ENCODE measurements at regions of chr5 and their contacts with region 1.

Region 1: GRCh38 chr5:181173420-181174342 is 26.3 kb downstream of the OR2V2 start:
- DNase-seq: peak; percentile 71
- H3K4me3 Mint-ChIP-seq: peak overlapping the region; percentile 87
- H3K27ac Mint-ChIP-seq: peak overlapping the region; percentile 92
- H3K4me1 Mint-ChIP-seq: peaks cover 34% of the 10 kb centered on the region
- H3K27me3 Mint-ChIP-seq: peaks cover 28% of the 10 kb centered on the region

Region 2: DNA sequence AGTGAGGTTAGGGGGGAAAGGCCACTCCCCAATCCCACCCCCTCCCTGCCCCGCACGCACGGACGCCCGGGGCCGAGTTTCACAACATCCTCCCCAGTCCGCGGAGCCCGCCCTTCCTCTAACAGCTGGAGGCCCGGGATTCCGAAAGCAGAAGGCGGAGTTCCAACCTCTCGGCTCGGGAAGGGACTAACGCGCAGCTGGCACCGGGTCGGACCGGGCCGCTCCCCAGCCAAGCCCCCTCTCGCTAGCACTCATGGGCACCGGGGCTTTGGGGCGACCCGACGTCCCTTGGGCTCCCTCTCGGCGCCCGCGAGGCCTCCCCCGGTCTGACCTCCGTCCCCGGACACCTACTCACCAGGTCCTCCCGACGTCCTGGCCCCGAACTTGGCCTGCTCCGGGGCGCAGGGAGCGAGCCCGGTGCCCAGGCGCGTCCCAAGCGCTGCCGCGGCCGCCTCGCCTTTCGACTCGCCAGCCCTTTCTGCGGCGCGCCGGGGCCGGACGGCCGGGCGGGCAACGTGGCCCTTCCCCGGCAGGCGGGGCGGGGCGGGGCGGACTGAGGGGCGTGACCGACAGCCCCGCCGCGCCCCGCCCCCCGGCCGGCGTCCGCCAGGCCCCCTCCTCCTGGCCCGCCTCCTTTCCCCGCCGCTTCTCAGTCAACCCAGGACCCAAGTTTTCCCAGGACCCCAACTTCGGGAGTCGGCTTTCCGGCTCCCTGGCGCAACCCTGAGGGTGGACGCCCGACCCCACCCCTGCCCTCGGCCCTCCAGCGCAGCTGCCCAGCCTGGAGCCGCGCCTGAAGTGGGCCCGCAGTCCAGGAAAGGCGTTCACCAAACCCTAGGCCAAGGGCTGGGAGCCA is 371.1 kb before region 1 on chr5 and contains the start of gene MGAT1:
- intact Hi-C with region 1: loop called (anchors 5 kb)
- DNase-seq: peak; percentile 66
- H3K4me3 Mint-ChIP-seq: peak within 1 kb of the TSS; percentile 92
- H3K27ac Mint-ChIP-seq: peak within 1 kb of the TSS; percentile 91
- H3K4me1 Mint-ChIP-seq: peaks cover 74% of the 10 kb centered on the region
- H3K27me3 Mint-ChIP-seq: no peaks in the 10 kb centered on the region
- total RNA-seq, gene MGAT1: 122 TPM in 2 replicates

Region 3: DNA sequence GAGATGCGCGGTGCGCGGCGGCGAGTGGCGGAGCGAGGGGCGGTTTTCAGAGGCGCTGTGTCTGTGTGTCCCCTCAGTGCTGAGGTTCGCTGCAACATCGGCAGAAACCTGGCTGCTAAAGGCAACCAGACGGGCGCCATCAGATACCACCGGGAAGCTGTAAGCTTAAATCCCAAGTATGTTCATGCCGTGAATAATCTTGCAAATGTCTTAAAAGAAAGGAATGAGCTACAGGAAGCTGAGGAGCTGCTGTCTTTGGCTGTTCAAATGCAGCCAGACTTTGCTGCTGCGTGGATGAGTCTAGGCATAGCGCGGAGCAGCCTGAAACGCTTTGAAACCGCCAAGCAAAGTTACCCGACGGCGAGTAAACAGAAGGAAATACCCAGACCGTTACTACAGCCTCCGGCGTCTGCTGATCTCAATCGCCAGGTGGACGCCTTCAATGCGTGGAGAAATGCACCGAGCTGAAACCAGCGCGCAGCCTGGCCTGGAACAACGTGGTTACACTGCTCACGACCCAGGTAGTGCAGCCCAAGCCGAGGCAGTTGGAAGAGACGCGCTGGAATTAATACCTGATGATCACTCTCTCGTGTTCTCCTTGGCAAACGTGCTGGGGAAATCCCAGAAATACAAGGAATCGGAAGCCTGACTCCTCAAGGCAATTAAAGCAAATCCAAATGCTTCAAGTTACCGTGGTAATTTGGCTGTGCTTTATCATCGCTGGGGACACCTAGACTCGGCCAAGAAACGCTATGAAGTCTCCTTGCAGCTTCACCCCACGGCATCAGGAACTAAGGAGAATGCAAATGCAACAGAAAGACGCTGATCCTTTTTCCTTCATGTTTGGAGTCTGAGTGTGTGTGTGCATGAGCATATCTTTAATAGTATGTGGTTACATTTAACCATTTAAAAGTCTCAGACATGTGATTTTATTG is 58.6 kb before region 1 on chr5:
- intact Hi-C with region 1: loop called (anchors 10 kb)
- DNase-seq: no peak
- H3K4me3 Mint-ChIP-seq: no peak overlapping the region
- H3K27ac Mint-ChIP-seq: no peak overlapping the region
- H3K4me1 Mint-ChIP-seq: peaks cover 10% of the 10 kb centered on the region
- H3K27me3 Mint-ChIP-seq: peaks cover 60% of the 10 kb centered on the region

Region 4: GRCh38 chr5:181207214-181208107 is 33.8 kb after region 1 on chr5:
- intact Hi-C with region 1: loop called (anchors 5 kb)
- DNase-seq: peak; percentile 74
- H3K4me3 Mint-ChIP-seq: peak overlapping the region; percentile 90
- H3K27ac Mint-ChIP-seq: peak overlapping the region; percentile 92
- H3K4me1 Mint-ChIP-seq: peaks cover 31% of the 10 kb centered on the region
- H3K27me3 Mint-ChIP-seq: peaks cover 24% of the 10 kb centered on the region

Measured in activated T-helper 2 cell treated with anti-CD3 and anti-CD28 coated beads, Interferon-gamma antibody, Interleukin-2, Interleukin-4, amounts not matched to agents 10 μg/mL and 5 μg/mL and 100 μg/mL, durations not matched to agents 14 hours and 24 hours and 36 hours (primary cell).